CD4-positive, alpha-beta T cell (primary cell): ENCODE measurements at regions of chr1 and their contacts with region 1.

Region 1: DNA sequence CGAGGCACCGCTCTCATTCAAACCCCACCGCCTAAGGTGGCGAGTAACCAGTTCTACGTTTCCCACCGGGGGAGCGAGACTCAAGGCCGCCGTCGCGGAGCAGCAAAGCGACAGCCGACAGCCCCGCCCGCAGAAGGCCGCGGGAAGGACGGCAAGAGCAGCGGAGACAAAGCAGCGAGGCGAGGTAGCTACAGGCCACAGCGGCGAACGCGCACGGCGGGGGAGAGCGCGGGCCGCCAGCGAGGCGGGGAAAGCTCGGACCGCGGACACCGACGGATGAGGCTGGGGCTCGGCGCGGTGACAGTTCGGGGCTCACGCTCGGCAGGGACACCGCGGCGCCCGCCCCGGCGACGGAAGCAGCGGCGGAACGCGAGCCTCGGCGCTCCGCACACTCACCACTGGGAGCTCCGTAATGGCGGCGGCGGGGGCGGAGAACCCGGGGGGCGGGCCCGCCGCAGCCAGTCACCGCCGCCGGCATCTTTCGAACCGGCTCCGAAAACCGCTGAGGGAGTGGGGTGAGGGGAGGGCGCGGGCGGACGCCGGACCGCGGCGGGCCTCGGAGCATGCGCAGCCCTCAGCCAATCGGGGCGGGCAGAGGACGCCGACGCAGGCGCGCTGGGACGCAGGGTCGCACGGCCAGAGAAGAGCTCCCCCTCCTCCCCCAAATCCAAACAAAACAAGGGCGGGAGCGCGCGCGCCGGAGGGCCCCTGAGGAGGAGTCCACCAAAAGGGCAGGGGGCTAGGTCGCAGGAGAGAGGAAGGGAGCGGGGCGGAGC is 666 bp downstream of the HP1BP3 start:
- DNase-seq: peak; percentile 90 to 98 (median 96)
- ATAC-seq: peak; percentile 75
- H3K4me3 ChIP-seq: peak overlapping the region; percentile 87
- H3K4me3 Mint-ChIP-seq: peak overlapping the region; percentile 99
- H3K27ac ChIP-seq: peak overlapping the region; percentile 85
- H3K27ac Mint-ChIP-seq: peak overlapping the region; percentile 97
- H3K4me1 ChIP-seq: peaks cover 37% of the 10 kb centered on the region
- H3K4me1 Mint-ChIP-seq: peaks cover 42% of the 10 kb centered on the region
- H3K27me3 ChIP-seq: no peaks in the 10 kb centered on the region
- H3K27me3 Mint-ChIP-seq: no peaks in the 10 kb centered on the region
- CTCF ChIP-seq: no peak

Region 2: DNA sequence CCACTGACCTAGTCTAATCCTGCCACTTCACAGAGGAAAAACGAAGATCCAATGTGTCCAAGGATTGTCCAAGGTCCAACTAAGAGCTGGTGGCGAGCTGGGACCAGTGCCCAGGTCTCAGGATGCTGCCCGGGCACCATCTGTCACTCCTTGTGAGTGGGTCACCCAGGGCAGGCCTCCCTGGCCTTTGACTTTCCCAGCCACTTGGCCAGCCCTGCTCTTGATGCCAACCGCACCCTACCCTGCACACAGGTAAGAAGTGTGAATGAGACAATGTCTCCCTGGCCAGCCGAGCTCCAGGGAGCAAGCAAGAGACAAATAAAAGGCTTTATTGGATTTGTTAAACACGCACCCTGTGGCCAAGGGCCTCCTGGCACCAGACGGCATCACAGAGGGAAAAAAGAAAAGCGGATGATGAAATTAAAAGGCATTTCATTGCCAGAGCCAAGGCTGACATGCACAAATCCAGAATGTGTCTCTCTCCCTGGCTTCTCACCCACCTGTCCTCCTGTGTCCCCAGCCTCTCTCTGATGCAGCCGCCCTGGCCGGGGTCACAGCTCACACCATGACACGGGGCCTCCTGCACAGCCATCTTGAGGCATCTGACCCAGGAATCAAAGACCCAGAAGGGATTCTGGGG is 373.2 kb before region 1 on chr1:
- CTCF ChIA-PET with region 1: no interaction called
- POLR2A ChIA-PET with region 1: no interaction called
- intact Hi-C with region 1: no loop called
- DNase-seq: no peak
- ATAC-seq: no peak
- H3K4me3 ChIP-seq: no peak overlapping the region
- H3K4me3 Mint-ChIP-seq: no peak overlapping the region
- H3K27ac ChIP-seq: no peak overlapping the region
- H3K27ac Mint-ChIP-seq: no peak overlapping the region
- H3K4me1 ChIP-seq: no peaks in the 10 kb centered on the region
- H3K4me1 Mint-ChIP-seq: no peaks in the 10 kb centered on the region
- H3K27me3 ChIP-seq: peaks cover 6 to 11% of the 10 kb centered on the region in 2 experiments
- H3K27me3 Mint-ChIP-seq: peaks cover 13% of the 10 kb centered on the region
- CTCF ChIP-seq: no peak

Region 3: GRCh38 chr1:20633190-20634064 is 153.0 kb before region 1 on chr1 and contains the start of gene PINK1:
- CTCF ChIA-PET with region 1: no interaction called
- POLR2A ChIA-PET with region 1: interaction called, 15 read pairs
- intact Hi-C with region 1: no loop called
- DNase-seq: peak; percentile 72 to 97 (median 86)
- ATAC-seq: peak; percentile 84
- H3K4me3 ChIP-seq: peak within 1 kb of the TSS; percentile 69
- H3K4me3 Mint-ChIP-seq: peak within 1 kb of the TSS; percentile 94
- H3K27ac ChIP-seq: peak within 1 kb of the TSS; percentile 52 to 72
- H3K27ac Mint-ChIP-seq: peak within 1 kb of the TSS; percentile 87
- H3K4me1 ChIP-seq: peaks cover 18% of the 10 kb centered on the region
- H3K4me1 Mint-ChIP-seq: peaks cover 12% of the 10 kb centered on the region
- H3K27me3 ChIP-seq: peaks cover 0 to 3% of the 10 kb centered on the region in 2 experiments
- H3K27me3 Mint-ChIP-seq: peaks cover 5% of the 10 kb centered on the region
- CTCF ChIP-seq: peak; percentile 99
- total RNA-seq, gene PINK1: 6.6 to 7.5 TPM

Region 4: GRCh38 chr1:20696397-20697329 is 89.8 kb before region 1 on chr1:
- CTCF ChIA-PET with region 1: interaction called, 6 read pairs
- POLR2A ChIA-PET with region 1: interaction called, 5 read pairs
- intact Hi-C with region 1: loop called in 1 of 2 experiments (anchors 5 kb)
- DNase-seq: peak; percentile 54 to 85 (median 65)
- ATAC-seq: peak; percentile 98
- H3K4me3 ChIP-seq: peak overlapping the region; percentile 86
- H3K4me3 Mint-ChIP-seq: peak overlapping the region; percentile 91
- H3K27ac ChIP-seq: no peak overlapping the region
- H3K27ac Mint-ChIP-seq: no peak overlapping the region
- H3K4me1 ChIP-seq: peaks cover 13% of the 10 kb centered on the region
- H3K4me1 Mint-ChIP-seq: peaks cover 5% of the 10 kb centered on the region
- H3K27me3 ChIP-seq: no peaks in the 10 kb centered on the region
- H3K27me3 Mint-ChIP-seq: no peaks in the 10 kb centered on the region
- CTCF ChIP-seq: peak; percentile 99

Region 5: DNA sequence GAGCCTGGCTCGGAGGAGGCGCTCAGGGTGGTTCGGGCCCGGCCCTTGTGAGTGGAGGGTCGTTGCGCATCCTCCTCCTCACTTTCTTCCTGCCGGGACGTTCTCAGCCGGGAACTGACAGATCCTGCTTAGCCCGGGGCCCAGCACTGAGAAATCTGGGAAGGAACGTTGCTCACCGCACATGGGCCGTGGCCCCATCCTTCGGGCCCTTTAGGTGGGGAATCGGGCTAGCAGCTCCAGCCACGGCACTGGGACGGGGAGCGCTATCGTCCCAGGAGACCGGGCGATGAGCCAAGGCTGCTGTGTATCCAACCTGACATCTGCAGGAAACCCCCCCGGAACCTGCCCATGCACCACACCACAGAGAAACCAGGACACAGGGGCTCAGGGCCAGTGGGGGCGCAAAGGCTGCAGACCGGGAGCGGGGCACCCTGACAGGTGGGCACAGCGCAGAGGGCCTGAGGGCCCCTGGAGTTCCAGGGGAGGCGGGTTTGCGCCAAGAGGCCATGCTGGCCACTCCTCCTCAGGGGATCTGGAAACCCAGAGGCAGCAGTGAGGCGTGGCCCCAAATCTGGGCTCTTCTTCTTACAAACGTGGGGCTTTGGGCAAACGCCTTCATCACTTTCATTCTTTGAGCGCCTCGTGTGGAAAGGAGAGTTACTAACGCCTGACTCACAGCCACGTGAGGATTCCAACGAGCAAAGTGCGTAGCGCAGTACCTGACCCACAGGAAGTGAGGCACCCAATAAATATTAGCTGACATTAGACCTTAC is 53.7 kb before region 1 on chr1 and contains the start of gene SH2D5:
- CTCF ChIA-PET with region 1: no interaction called
- POLR2A ChIA-PET with region 1: interaction called, 21 read pairs
- intact Hi-C with region 1: loop called in 1 of 2 experiments (anchors 5 kb)
- DNase-seq: peak; percentile 36 to 89 (median 59)
- ATAC-seq: peak; percentile 78
- H3K4me3 ChIP-seq: peak within 1 kb of the TSS; percentile 66
- H3K4me3 Mint-ChIP-seq: peak within 1 kb of the TSS; percentile 90
- H3K27ac ChIP-seq: no peak within 1 kb of the TSS
- H3K27ac Mint-ChIP-seq: peak within 1 kb of the TSS; percentile 29
- H3K4me1 ChIP-seq: peaks cover 32% of the 10 kb centered on the region
- H3K4me1 Mint-ChIP-seq: peaks cover 16% of the 10 kb centered on the region
- H3K27me3 ChIP-seq: peaks cover 24 to 30% of the 10 kb centered on the region in 2 experiments
- H3K27me3 Mint-ChIP-seq: peaks cover 33% of the 10 kb centered on the region
- CTCF ChIP-seq: peak; percentile 30
- total RNA-seq, gene SH2D5: 0.08 TPM in 1 of 2 experiments, not detected in the other

Region 6: DNA sequence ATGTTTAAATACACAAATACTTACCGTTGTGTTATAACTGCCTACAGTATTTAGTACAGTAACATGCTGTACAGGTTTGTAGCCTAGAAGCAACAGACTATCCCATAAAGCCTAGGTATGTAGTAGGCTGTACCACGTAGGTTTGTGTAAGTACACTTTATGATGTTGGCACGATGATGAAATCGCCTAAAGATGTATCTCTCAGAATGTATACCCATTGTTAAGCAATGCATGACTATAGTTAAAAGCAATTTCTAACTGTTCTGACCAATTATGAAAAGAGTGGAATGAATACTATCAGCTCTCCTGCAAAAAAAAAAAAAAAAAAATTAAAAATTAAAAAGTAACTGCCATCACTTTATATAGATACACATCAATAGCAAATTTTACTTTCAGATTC is 10.7 kb before region 1 on chr1:
- CTCF ChIA-PET with region 1: no interaction called
- POLR2A ChIA-PET with region 1: interaction called, 13 read pairs
- intact Hi-C with region 1: no loop called
- DNase-seq: no peak
- ATAC-seq: no peak
- H3K4me3 ChIP-seq: no peak overlapping the region
- H3K4me3 Mint-ChIP-seq: no peak overlapping the region
- H3K27ac ChIP-seq: no peak overlapping the region
- H3K27ac Mint-ChIP-seq: no peak overlapping the region
- H3K4me1 ChIP-seq: peaks cover 2% of the 10 kb centered on the region
- H3K4me1 Mint-ChIP-seq: peaks cover 51% of the 10 kb centered on the region
- H3K27me3 ChIP-seq: no peaks in the 10 kb centered on the region
- H3K27me3 Mint-ChIP-seq: no peaks in the 10 kb centered on the region
- CTCF ChIP-seq: no peak

Region 7: DNA sequence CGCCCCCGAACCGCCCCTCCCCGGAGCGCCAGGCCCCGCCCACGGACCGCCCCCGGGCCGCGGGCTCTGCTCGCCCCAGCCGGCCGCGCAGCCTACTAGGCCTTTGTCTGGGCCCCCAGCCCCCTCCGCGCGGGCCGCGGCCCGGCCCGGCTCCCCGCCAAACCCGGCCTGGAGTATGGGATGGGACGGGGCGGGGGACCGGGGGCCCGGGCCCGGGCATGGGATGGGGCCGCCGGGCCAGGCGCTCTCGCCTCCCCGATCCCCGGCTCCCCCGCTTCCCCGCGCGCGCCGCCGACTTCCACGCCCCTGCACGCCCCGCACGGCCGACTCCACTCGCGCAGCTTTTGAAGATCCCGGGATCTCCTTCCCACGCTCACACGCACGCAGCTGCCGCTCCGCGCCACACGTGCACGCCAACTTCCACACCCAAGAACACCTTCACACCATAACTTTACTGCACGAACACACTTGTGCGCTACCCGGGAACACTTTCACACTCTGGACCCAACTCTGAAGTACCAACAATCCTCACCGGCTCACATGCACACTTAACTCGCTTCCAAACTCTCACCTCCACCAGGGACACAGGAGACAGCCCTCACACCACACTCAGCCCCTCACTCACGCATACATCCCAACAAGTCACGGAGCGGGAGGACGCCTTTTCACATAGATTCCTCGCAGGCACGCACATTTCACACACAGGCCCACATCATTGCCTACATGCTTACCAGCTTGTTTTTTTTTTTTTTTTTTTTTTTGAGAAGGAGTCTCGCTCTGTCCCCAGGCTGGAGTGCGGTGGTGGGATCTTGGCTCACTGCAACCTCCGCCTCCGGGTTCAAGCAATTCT is 1151.2 kb after region 1 on chr1:
- CTCF ChIA-PET with region 1: no interaction called
- POLR2A ChIA-PET with region 1: no interaction called
- intact Hi-C with region 1: loop called in 1 of 2 experiments (anchors 5 kb)
- DNase-seq: peak; percentile 35 to 84 (median 64)
- ATAC-seq: peak; percentile 82
- H3K4me3 ChIP-seq: peak overlapping the region; percentile 55
- H3K4me3 Mint-ChIP-seq: peak overlapping the region; percentile 90
- H3K27ac ChIP-seq: no peak overlapping the region
- H3K27ac Mint-ChIP-seq: peak overlapping the region; percentile 48
- H3K4me1 ChIP-seq: peaks cover 25% of the 10 kb centered on the region
- H3K4me1 Mint-ChIP-seq: peaks cover 27% of the 10 kb centered on the region
- H3K27me3 ChIP-seq: no peaks in the 10 kb centered on the region
- H3K27me3 Mint-ChIP-seq: no peaks in the 10 kb centered on the region
- CTCF ChIP-seq: no peak